GM10248 (cell line): ENCODE measurements at regions of chr9 and their contacts with region 1.

Region 1: GRCh38 chr9:112198646-112199045 is 23.5 kb upstream of the SUSD1 start:
- DNase-seq: no peak
- CTCF ChIP-seq: no peak

Region 2: GRCh38 chr9:112012026-112012902 is 186.4 kb before region 1 on chr9:
- CTCF ChIA-PET with region 1: no interaction called
- POLR2A ChIA-PET with region 1: no interaction called
- DNase-seq: peak; percentile 65
- CTCF ChIP-seq: no peak

Region 3: GRCh38 chr9:112174218-112174964 is 24.3 kb before region 1 on chr9:
- CTCF ChIA-PET with region 1: no interaction called
- POLR2A ChIA-PET with region 1: no interaction called
- DNase-seq: peak; percentile 86
- CTCF ChIP-seq: no peak

Region 4: GRCh38 chr9:112186695-112187094 is 12.0 kb before region 1 on chr9:
- CTCF ChIA-PET with region 1: interaction called, 10 read pairs
- POLR2A ChIA-PET with region 1: no interaction called
- DNase-seq: no peak
- CTCF ChIP-seq: no peak

Region 5: GRCh38 chr9:112212926-112213325 is 14.3 kb after region 1 on chr9:
- CTCF ChIA-PET with region 1: no interaction called
- POLR2A ChIA-PET with region 1: no interaction called
- DNase-seq: no peak
- CTCF ChIP-seq: no peak

Region 6: DNA sequence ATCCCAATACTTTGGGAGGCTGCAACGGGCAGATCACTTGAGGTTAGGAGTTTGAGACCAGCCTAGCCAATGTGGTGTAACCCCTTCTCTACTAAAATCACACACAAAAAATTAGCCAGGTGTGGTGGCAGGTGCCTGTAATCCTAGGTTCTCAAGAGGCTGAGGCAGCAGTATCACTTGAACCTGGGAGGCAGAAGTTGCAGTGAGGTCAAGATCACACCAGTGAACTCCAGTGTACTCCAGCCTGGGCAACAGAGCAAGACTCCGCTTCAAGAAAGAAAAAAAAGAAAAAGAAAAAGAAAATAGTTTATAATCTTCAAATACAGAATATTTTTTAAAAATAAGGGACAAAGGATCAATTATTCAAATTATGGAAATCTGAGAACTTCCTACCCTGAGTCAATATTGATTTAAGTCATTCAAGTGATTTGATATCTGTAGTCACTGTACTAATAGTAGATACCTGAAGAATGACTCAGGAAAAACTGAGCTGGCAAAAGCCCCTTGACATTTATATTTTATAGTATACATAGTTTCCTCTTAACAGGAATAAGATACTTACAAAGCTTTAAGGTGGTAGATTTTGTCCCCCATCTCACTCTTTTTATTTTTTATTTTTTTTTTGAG is 72.9 kb after region 1 on chr9:
- CTCF ChIA-PET with region 1: no interaction called
- POLR2A ChIA-PET with region 1: no interaction called
- DNase-seq: no peak
- CTCF ChIP-seq: no peak